ENCODE measurements at regions of chr2 and their contacts with region 1.

Region 1: GRCh38 chr2:98835831-98836385 is 100.1 kb downstream of the CRACDL start:
- DNase-seq: no peak
- ATAC-seq: no peak
- H3K4me3 ChIP-seq: no peak overlapping the region
- H3K4me3 Mint-ChIP-seq: no peak overlapping the region
- H3K27ac ChIP-seq: no peak overlapping the region
- H3K27ac Mint-ChIP-seq: no peak overlapping the region
- H3K4me1 ChIP-seq: peaks cover 0 to 3% of the 10 kb centered on the region in 2 donors
- H3K4me1 Mint-ChIP-seq: peaks cover 7% of the 10 kb centered on the region
- H3K27me3 ChIP-seq: no peaks in the 10 kb centered on the region
- H3K27me3 Mint-ChIP-seq: no peaks in the 10 kb centered on the region
- CTCF ChIP-seq: no peak

Region 2: DNA sequence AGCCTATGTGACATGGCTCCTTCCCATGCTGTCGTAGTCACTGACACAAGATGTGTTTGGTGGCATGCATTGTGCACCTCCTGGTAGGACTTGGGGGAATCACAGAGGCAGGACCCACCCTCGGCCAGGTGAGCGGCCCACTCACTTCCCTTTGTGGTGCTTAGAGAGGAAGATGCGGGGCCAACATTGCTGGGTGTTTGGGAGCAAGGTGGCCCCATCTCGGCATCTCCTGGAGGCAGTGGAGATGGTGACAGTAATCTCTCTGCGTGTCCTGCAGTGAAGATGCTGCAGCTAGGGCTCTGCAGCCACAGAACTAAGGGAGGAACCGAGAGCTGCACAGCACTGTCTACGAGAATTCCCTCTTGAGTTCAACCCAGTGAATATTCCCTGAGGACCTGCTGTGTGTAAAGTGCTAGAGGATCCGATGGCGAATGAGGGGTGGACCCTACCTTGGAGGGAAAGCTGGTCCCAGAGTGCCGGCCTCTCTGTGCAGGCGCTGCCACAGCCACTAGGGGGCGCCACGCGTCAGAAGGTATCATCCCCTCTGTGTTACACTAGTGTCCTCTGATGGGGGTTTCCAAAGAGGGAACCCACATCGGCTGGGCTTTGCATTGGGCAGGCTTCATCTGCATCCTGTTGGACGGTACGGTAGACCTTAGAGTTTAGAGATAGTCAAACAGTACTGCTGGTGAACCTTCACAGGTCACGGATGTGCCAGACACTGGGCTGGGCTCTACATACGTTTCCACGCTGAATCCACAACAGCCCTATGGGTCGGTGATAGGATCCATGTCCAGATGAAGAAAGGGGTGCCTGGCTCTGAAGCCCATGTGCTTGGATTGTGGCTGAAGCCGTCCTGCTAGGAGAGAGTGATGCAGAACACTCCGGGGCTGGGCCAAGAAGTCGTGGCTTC is 266.8 kb before region 1 on chr2:
- CTCF ChIA-PET with region 1: interaction called, 5 read pairs
- POLR2A ChIA-PET with region 1: no interaction called
- intact Hi-C with region 1: loop called (anchors 5 kb)
- DNase-seq: peak; percentile 63
- ATAC-seq: peak; percentile 76
- H3K4me3 ChIP-seq: no peak overlapping the region
- H3K4me3 Mint-ChIP-seq: no peak overlapping the region
- H3K27ac ChIP-seq: no peak overlapping the region
- H3K27ac Mint-ChIP-seq: no peak overlapping the region
- H3K4me1 ChIP-seq: no peaks in the 10 kb centered on the region
- H3K4me1 Mint-ChIP-seq: no peaks in the 10 kb centered on the region
- H3K27me3 ChIP-seq: no peaks in the 10 kb centered on the region
- H3K27me3 Mint-ChIP-seq: no peaks in the 10 kb centered on the region
- CTCF ChIP-seq: peak; percentile 93

Region 3: GRCh38 chr2:98654699-98655495 is 181.0 kb before region 1 on chr2:
- CTCF ChIA-PET with region 1: interaction called, 124 read pairs
- POLR2A ChIA-PET with region 1: no interaction called
- intact Hi-C with region 1: no loop called
- DNase-seq: peak; percentile 38
- ATAC-seq: peak; percentile 68
- H3K4me3 ChIP-seq: no peak overlapping the region
- H3K4me3 Mint-ChIP-seq: peak overlapping the region; percentile 6
- H3K27ac ChIP-seq: peak overlapping the region in 1 of 2 donors; percentile 37
- H3K27ac Mint-ChIP-seq: peak overlapping the region; percentile 71
- H3K4me1 ChIP-seq: peaks cover 5 to 8% of the 10 kb centered on the region in 2 donors
- H3K4me1 Mint-ChIP-seq: peaks cover 29% of the 10 kb centered on the region
- H3K27me3 ChIP-seq: no peaks in the 10 kb centered on the region
- H3K27me3 Mint-ChIP-seq: no peaks in the 10 kb centered on the region
- CTCF ChIP-seq: no peak

Region 4: GRCh38 chr2:99066075-99066958 is 230.4 kb after region 1 on chr2:
- CTCF ChIA-PET with region 1: interaction called, 4 read pairs
- POLR2A ChIA-PET with region 1: no interaction called
- intact Hi-C with region 1: loop called (anchors 5 kb)
- DNase-seq: peak; percentile 62
- ATAC-seq: peak; percentile 78
- H3K4me3 ChIP-seq: peak overlapping the region in 1 of 5 experiments; percentile 20
- H3K4me3 Mint-ChIP-seq: no peak overlapping the region
- H3K27ac ChIP-seq: peak overlapping the region in 1 of 2 donors; percentile 52
- H3K27ac Mint-ChIP-seq: no peak overlapping the region
- H3K4me1 ChIP-seq: peaks cover 9 to 10% of the 10 kb centered on the region in 2 donors
- H3K4me1 Mint-ChIP-seq: no peaks in the 10 kb centered on the region
- H3K27me3 ChIP-seq: no peaks in the 10 kb centered on the region
- H3K27me3 Mint-ChIP-seq: no peaks in the 10 kb centered on the region
- CTCF ChIP-seq: peak; percentile 70

Region 5: GRCh38 chr2:99171377-99172140 is 335.7 kb after region 1 on chr2:
- CTCF ChIA-PET with region 1: no interaction called
- POLR2A ChIA-PET with region 1: no interaction called
- intact Hi-C with region 1: loop called (anchors 10 kb)
- DNase-seq: no peak
- ATAC-seq: no peak
- H3K4me3 ChIP-seq: no peak overlapping the region
- H3K4me3 Mint-ChIP-seq: no peak overlapping the region
- H3K27ac ChIP-seq: no peak overlapping the region
- H3K27ac Mint-ChIP-seq: no peak overlapping the region
- H3K4me1 ChIP-seq: no peaks in the 10 kb centered on the region
- H3K4me1 Mint-ChIP-seq: peaks cover 7% of the 10 kb centered on the region
- H3K27me3 ChIP-seq: no peaks in the 10 kb centered on the region
- H3K27me3 Mint-ChIP-seq: no peaks in the 10 kb centered on the region
- CTCF ChIP-seq: no peak

Region 6: GRCh38 chr2:99867770-99868169 is 1031.9 kb after region 1 on chr2:
- CTCF ChIA-PET with region 1: no interaction called
- POLR2A ChIA-PET with region 1: no interaction called
- intact Hi-C with region 1: no loop called
- DNase-seq: no peak
- ATAC-seq: no peak
- H3K4me3 ChIP-seq: no peak overlapping the region
- H3K4me3 Mint-ChIP-seq: no peak overlapping the region
- H3K27ac ChIP-seq: no peak overlapping the region
- H3K27ac Mint-ChIP-seq: peak overlapping the region; percentile 20
- H3K4me1 ChIP-seq: peaks cover 45 to 46% of the 10 kb centered on the region in 2 donors
- H3K4me1 Mint-ChIP-seq: peaks cover 76% of the 10 kb centered on the region
- H3K27me3 ChIP-seq: no peaks in the 10 kb centered on the region
- H3K27me3 Mint-ChIP-seq: no peaks in the 10 kb centered on the region
- CTCF ChIP-seq: no peak

Measured in B cell (primary cell).